ENCODE measurements at regions of chr17 and their contacts with region 1.

Region 1: GRCh38 chr17:45135192-45135977 is at the start of gene ACBD4:
- DNase-seq: peak; percentile 98
- ATAC-seq: peak; percentile 89
- H3K4me3 Mint-ChIP-seq: peak within 1 kb of the TSS; percentile 88
- H3K27ac Mint-ChIP-seq: peak within 1 kb of the TSS; percentile 86
- H3K4me1 Mint-ChIP-seq: peaks cover 12% of the 10 kb centered on the region
- H3K27me3 Mint-ChIP-seq: no peaks in the 10 kb centered on the region
- CTCF ChIP-seq: peak; percentile 100
- total RNA-seq, gene ACBD4: 12.4 to 12.6 TPM

Region 2: GRCh38 chr17:44872131-44872768 is 263.1 kb before region 1 on chr17:
- CTCF ChIA-PET with region 1: no interaction called
- POLR2A ChIA-PET with region 1: no interaction called
- intact Hi-C with region 1: no loop called
- DNase-seq: no peak
- ATAC-seq: no peak
- H3K4me3 Mint-ChIP-seq: no peak overlapping the region
- H3K27ac Mint-ChIP-seq: no peak overlapping the region
- H3K4me1 Mint-ChIP-seq: no peaks in the 10 kb centered on the region
- H3K27me3 Mint-ChIP-seq: no peaks in the 10 kb centered on the region
- CTCF ChIP-seq: no peak

Region 3: DNA sequence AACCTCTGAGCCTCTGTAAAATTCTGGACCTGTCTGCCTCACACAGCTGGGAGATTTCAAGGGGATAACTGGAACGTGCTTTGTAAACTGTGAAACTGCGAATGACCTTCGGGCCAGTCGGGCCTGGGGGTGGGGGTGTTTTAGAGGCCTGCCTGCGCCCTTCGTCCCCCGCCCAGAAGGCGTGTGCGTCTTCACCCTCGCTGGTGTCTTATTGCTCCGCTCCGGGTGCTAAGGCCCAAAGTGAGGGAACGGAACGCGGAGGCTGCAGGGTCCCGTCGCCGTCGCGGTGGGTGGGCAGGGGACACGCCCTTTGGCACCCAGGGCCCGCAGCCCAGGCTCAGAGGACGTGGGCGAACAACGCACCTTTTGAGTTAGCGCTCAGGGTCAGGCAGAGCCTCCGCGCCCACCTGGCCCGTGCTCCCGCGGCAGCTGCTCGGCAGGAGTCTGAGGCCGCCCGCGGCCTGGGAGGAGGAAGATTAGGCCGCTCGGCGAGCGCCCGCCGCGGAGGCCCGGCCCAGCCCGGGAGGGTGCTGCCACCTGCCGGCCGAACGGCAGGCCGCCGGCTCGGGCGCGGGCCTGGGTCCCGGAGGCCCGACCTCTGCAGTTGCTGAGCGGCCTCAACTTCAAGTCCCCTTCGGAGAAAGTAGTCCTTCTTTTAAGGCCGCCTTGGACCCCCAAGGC is 113.6 kb before region 1 on chr17:
- CTCF ChIA-PET with region 1: interaction called, 12 read pairs
- POLR2A ChIA-PET with region 1: no interaction called
- intact Hi-C with region 1: no loop called
- DNase-seq: peak; percentile 65
- ATAC-seq: peak; percentile 68
- H3K4me3 Mint-ChIP-seq: peak overlapping the region; percentile 33
- H3K27ac Mint-ChIP-seq: no peak overlapping the region
- H3K4me1 Mint-ChIP-seq: peaks cover 21% of the 10 kb centered on the region
- H3K27me3 Mint-ChIP-seq: peaks cover 33% of the 10 kb centered on the region
- CTCF ChIP-seq: peak; percentile 96

Region 4: GRCh38 chr17:45098869-45099616 is 36.3 kb before region 1 on chr17:
- CTCF ChIA-PET with region 1: interaction called, 14 read pairs
- POLR2A ChIA-PET with region 1: no interaction called
- intact Hi-C with region 1: no loop called
- DNase-seq: peak; percentile 85
- ATAC-seq: peak; percentile 89
- H3K4me3 Mint-ChIP-seq: no peak overlapping the region
- H3K27ac Mint-ChIP-seq: peak overlapping the region; percentile 53
- H3K4me1 Mint-ChIP-seq: no peaks in the 10 kb centered on the region
- H3K27me3 Mint-ChIP-seq: no peaks in the 10 kb centered on the region
- CTCF ChIP-seq: peak; percentile 92

Region 5: DNA sequence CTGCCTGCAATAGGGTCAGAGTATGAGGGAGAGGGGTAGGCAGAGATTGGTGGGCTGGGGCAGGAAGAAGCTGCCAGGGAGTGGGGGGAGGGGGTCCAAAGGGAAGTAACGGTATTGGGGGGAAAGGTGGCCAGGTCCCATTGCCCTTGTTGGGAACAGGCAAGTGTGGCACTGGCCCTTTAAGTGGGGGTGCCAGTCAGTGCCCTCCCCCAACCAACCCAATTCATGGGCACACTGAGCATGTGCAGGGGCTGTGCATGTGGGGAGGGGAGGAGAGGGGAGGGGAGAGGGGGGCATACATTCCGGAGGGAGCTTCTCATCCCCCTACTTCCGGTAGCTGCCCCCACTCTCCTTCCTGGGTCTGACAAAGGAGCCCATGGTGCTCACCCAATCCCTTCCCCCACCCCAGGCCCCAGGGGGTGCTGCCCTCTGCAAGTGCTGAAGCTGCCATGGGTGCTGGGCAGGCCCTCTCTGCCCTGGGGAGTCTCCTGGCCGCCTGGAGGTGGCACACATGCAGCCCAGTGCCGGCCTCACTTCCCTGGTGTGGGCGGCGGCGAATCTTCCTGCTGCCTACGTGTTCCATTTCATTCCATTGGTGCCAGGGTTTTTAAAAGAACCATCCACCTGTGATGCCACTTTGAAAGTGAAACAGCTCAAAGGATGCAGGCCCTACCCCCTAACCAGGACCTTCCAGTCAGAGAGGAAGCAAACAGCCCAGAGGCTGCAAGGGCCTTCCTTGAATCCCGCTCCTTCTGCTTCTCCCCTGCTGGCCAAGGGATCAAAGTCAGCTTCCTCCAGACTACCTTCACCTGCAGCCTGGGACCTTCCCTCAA is 37.3 kb after region 1 on chr17:
- CTCF ChIA-PET with region 1: interaction called, 40 read pairs
- POLR2A ChIA-PET with region 1: no interaction called
- intact Hi-C with region 1: no loop called
- DNase-seq: peak; percentile 77
- ATAC-seq: peak; percentile 78
- H3K4me3 Mint-ChIP-seq: peak overlapping the region; percentile 68
- H3K27ac Mint-ChIP-seq: peak overlapping the region; percentile 89
- H3K4me1 Mint-ChIP-seq: peaks cover 25% of the 10 kb centered on the region
- H3K27me3 Mint-ChIP-seq: no peaks in the 10 kb centered on the region
- CTCF ChIP-seq: no peak

Region 6: GRCh38 chr17:45218895-45219661 is 83.7 kb after region 1 on chr17:
- CTCF ChIA-PET with region 1: interaction called, 49 read pairs
- POLR2A ChIA-PET with region 1: no interaction called
- intact Hi-C with region 1: no loop called
- DNase-seq: peak; percentile 94
- ATAC-seq: peak; percentile 12
- H3K4me3 Mint-ChIP-seq: peak overlapping the region; percentile 94
- H3K27ac Mint-ChIP-seq: peak overlapping the region; percentile 63
- H3K4me1 Mint-ChIP-seq: peaks cover 26% of the 10 kb centered on the region
- H3K27me3 Mint-ChIP-seq: no peaks in the 10 kb centered on the region
- CTCF ChIP-seq: peak; percentile 99

Region 7: GRCh38 chr17:45256114-45256966 is 121.0 kb after region 1 on chr17:
- CTCF ChIA-PET with region 1: interaction called, 21 read pairs
- POLR2A ChIA-PET with region 1: no interaction called
- intact Hi-C with region 1: no loop called
- DNase-seq: peak; percentile 49
- ATAC-seq: peak; percentile 35
- H3K4me3 Mint-ChIP-seq: no peak overlapping the region
- H3K27ac Mint-ChIP-seq: peak overlapping the region; percentile 73
- H3K4me1 Mint-ChIP-seq: peaks cover 58% of the 10 kb centered on the region
- H3K27me3 Mint-ChIP-seq: no peaks in the 10 kb centered on the region
- CTCF ChIP-seq: peak; percentile 37